Calu3 (cell line): ENCODE measurements at regions of chr6 and their contacts with region 1.

Region 1: GRCh38 chr6:71012866-71013469 is 56.1 kb upstream of the B3GAT2 start:
- DNase-seq: peak; percentile 50
- H3K4me3 Mint-ChIP-seq: no peak overlapping the region
- H3K27ac Mint-ChIP-seq: no peak overlapping the region
- H3K4me1 Mint-ChIP-seq: no peaks in the 10 kb centered on the region
- H3K27me3 Mint-ChIP-seq: peaks cover 33% of the 10 kb centered on the region
- CTCF ChIP-seq: peak; percentile 85

Region 2: GRCh38 chr6:70507161-70507560 is 505.8 kb before region 1 on chr6:
- CTCF ChIA-PET with region 1: no interaction called
- intact Hi-C with region 1: no loop called
- DNase-seq: no peak
- H3K4me3 Mint-ChIP-seq: no peak overlapping the region
- H3K27ac Mint-ChIP-seq: peak overlapping the region; percentile 12
- H3K4me1 Mint-ChIP-seq: peaks cover 9% of the 10 kb centered on the region
- H3K27me3 Mint-ChIP-seq: no peaks in the 10 kb centered on the region
- CTCF ChIP-seq: no peak

Region 3: GRCh38 chr6:70901326-70901725 is 111.6 kb before region 1 on chr6:
- CTCF ChIA-PET with region 1: no interaction called
- intact Hi-C with region 1: loop called (anchors 10 kb)
- DNase-seq: no peak
- H3K4me3 Mint-ChIP-seq: no peak overlapping the region
- H3K27ac Mint-ChIP-seq: no peak overlapping the region
- H3K4me1 Mint-ChIP-seq: no peaks in the 10 kb centered on the region
- H3K27me3 Mint-ChIP-seq: peaks cover 16% of the 10 kb centered on the region
- CTCF ChIP-seq: peak; percentile 35

Region 4: DNA sequence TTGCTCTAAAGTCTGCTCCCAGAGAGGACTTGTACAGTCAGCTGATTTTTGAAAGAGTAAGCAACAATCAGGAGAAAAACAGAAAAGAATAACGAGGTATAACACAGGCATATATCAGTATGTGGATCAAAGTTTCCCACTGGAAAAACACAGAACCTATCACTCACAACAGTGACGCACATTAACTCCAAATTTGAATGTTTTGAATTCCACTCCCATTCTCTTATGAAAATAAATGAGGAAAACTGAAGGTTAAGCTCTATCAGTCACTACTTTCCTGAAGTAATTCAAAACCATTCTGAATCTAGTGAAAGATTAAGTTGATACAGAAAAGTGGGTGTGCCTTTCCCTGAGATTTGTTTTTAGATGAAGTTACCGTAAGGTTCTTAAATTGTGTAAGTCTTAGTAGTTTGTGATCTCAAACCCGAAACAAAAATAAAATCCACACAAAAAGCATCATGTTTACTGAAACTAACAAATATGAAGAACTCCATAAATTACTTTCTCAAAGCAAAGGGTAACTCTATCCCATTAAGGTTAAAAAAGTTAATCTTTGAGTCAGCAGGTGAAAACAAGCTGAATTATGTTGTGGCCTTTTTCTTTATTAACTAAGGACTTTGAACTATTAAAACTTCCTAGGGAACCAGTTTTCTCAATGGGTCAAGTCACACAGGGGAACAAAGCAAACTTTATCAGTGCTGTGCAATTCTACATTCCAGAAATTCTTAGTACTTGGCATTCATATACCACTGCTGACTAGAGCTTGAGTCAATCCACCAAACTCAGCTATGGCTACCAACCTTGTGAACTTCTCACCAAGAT is 391.4 kb after region 1 on chr6:
- CTCF ChIA-PET with region 1: no interaction called
- intact Hi-C with region 1: no loop called
- DNase-seq: peak; percentile 51
- H3K4me3 Mint-ChIP-seq: peak overlapping the region; percentile 76
- H3K27ac Mint-ChIP-seq: peak overlapping the region; percentile 87
- H3K4me1 Mint-ChIP-seq: peaks cover 41% of the 10 kb centered on the region
- H3K27me3 Mint-ChIP-seq: no peaks in the 10 kb centered on the region
- CTCF ChIP-seq: no peak